Left lung (tissue), 14 donors: ENCODE measurements at regions of chr9 and their contacts with region 1.

Region 1: DNA sequence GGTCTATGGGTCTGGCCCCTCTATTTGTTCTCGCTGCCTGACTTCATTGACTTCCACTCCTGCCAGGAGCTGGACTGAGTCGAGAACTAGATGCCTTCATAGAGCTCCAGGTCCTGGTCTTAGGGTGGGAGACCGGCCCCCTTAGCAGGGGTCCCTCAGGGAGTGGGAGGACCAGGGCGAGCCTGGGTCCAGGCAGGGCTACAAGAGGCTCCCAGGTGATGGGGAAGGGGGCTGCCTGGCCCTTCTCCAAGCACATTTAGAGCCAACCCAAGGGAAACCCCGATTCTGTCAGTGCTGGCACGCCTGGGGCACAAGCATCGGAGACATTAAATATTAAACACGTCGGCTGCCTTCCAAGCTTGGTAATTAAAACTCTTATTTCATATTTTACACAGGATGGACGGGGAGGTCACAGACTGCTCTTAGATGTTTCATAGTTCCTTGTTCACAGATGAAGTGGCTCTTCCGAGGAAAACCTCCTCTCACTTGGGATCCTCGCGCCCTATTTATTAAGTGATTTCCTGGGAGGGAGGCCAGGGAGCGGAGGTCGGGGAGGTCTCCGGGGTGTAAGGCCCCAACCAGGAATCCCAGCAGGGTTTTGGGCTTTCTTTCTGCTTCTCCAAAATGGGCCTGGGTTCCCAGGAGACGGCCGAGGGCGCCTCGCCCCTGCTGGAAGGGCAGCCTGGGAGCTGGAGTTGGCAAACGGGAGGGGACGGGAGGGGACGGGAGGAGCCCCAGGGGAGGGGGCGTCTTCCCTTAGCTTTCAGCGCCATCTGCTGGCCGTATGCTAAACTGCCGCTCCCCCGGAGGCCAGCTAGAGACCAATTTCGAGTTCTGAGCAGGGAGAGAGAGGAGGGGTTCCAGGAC is 23.4 kb upstream of the ZBTB43 start:
- DNase-seq: peak; percentile 74 to 93 (median 83)
- ATAC-seq: peak; percentile 99
- H3K4me3 ChIP-seq: no peak overlapping the region
- H3K27ac ChIP-seq: no peak overlapping the region
- H3K4me1 ChIP-seq: peaks cover 0 to 6% of the 10 kb centered on the region in 2 donors
- H3K27me3 ChIP-seq: peaks cover 2 to 80% of the 10 kb centered on the region in 2 donors
- CTCF ChIP-seq: peak; percentile 97 to 98

Region 2: GRCh38 chr9:126611592-126612325 is 169.7 kb before region 1 on chr9:
- intact Hi-C with region 1: loop called in 1 of 2 experiments (anchors 10 kb)
- DNase-seq: peak in 3 of 4 donors; percentile 62 to 93 (median 79)
- ATAC-seq: peak; percentile 95
- H3K4me3 ChIP-seq: peak overlapping the region in 1 of 2 donors; percentile 21
- H3K27ac ChIP-seq: no peak overlapping the region
- H3K4me1 ChIP-seq: peaks cover 5 to 47% of the 10 kb centered on the region in 2 donors
- H3K27me3 ChIP-seq: peaks cover 70 to 97% of the 10 kb centered on the region in 2 donors
- CTCF ChIP-seq: peak; percentile 84 to 88

Region 3: DNA sequence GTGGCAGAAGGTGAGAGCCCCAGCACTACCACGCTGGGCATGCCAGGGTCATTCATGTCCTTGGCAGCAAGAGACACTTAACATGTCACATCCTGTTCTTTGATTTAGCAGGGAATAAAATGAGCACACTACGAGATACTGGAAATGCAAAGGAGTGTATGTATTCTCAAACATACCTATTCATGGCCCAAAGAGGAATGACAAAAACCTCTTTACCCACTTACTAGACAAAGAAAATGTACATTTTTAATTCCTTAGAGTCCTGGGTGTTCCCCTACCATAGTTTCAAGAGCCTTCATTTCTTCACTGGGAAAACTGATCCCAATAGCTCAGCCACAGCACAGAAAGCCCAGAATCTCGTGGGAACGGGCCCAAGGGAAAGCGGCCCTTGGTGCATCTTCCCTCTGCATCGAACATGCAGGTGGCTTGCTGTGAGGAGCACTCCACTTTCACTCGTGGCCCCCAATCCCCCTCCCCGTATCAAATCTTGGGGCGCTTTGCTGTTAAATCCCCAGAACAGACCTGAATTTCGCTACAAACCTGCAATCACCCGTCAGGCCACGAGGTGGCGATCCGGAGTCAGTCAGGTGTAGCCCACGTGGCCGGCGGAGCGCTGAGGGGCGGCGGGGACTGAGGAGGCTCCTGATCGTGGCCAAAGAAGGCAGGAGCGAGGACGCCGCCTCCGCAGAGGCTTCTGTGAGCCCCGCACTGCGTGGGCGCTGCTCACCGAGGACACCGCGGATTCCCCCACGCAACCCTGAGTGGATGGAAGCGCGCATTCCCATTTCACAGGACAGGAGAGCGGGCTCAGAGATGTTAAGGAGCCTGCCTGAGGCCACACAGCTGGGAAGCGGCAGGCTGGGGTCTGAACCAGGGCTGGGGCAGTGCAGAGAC is 76.3 kb before region 1 on chr9:
- intact Hi-C with region 1: loop called in 1 of 2 experiments (anchors 5 kb)
- DNase-seq: peak; percentile 57 to 92 (median 78)
- ATAC-seq: peak; percentile 93
- H3K4me3 ChIP-seq: peak overlapping the region in 1 of 2 donors; percentile 11
- H3K27ac ChIP-seq: no peak overlapping the region
- H3K4me1 ChIP-seq: peaks cover 8 to 9% of the 10 kb centered on the region in 2 donors
- H3K27me3 ChIP-seq: peaks cover 11 to 82% of the 10 kb centered on the region in 2 donors
- CTCF ChIP-seq: peak; percentile 75 to 79